ENCODE measurements at regions of chrX and their contacts with region 1.

Region 1: DNA sequence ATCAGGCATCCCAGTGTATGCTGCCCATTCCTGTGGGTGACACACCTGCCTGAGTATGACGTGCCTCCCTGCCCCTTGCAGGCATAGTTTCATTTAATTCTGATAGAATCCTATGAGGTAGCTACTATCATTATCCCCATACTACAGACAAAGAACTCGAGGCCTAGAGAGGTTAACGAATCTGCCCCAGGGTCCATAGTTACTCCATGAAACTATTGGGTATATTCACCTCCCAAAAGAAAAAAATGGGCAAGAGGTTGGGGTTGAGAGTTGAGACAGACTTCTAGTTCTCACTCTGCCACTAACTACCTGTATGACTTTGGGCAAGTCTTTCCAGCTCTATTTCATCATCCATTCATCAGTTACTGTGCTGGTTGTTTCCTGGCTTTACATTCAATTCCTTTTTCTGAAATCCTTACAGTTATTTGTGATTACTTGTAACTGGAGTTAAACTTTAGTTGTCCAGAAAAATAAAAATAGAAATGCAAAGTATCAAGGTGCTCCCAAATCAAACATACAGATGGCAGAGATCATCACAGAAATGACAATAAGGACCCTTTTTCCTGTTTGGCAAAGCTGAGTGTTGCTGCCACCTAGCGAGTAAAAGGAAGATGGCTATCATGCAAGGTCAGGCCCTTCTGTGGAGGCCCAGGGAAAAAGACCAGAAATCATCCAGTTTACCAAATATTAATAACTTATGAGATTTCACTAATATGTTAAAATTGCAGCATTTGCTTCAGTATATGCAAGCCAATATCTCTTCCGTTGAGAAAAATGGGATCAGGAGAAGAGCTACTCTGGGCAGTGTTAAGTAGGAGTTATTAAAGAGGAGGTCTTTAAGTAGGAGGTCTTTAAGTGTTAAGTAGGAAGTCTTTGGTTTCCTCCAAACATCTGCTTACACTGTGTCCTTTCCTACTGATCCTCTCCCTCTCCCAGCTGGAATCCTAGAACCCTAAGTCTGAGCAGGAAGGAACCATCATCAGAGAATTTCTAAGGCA is 17.1 kb upstream of the MAP7D3 start:
- DNase-seq: peak; percentile 34 to 42
- H3K4me3 ChIP-seq: no peak overlapping the region
- H3K27ac ChIP-seq: no peak overlapping the region
- H3K4me1 ChIP-seq: no peaks in the 10 kb centered on the region
- H3K27me3 ChIP-seq: no peaks in the 10 kb centered on the region
- CTCF ChIP-seq: peak; percentile 48 to 74 (median 64)
- POLR2A ChIP-seq: no peak

Region 2: GRCh38 chrX:136028251-136028984 is 239.9 kb before region 1 on chrX:
- intact Hi-C with region 1: loop called (anchors 5 kb)
- DNase-seq: no peak
- H3K4me3 ChIP-seq: no peak overlapping the region
- H3K27ac ChIP-seq: peak overlapping the region; percentile 87 to 97 (median 92)
- H3K4me1 ChIP-seq: peaks cover 23 to 43% of the 10 kb centered on the region in 2 donors
- H3K27me3 ChIP-seq: no peaks in the 10 kb centered on the region
- CTCF ChIP-seq: peak in 5 of 6 experiments; percentile 33 to 84 (median 60)
- POLR2A ChIP-seq: no peak

Region 3: DNA sequence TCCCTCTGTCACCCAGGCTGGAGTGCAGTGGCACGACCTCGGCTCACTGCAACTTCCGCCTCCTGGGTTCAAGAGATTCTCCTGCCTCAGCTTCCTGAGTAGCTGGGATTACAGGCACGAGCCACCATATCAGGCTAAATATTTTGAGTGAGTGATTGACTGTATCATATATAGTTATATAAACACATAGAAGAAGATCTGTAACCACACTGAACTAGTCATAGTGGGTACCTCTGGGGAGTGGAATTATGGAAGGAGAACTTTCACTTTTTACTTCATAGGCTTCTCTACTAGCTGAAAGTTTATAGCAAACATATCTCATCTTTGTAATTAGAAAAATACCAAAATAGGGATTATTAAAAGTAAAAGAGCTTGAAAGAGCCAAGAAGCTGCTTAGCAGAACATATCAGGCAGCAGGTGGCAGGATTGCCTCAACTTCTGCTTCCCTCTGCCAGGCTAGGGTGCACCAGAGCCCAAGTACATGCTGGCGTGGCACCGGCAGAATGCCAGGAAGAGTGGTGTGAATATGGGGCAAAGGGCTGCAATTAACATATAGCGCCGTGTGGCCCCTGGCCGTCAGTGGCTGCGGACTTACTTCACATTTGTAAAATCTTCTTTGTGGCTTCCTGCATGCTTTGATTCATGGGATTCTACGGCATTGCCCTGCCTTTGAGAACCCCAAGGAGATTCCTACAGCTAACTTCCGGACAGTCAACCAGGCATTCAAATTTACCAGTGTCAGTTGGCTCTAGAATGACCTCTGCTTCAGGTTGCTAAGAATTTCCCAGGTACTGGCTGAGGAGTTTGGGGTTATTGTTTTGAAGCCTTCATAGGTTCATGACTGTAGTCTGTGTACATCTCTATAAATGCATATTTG is 340.2 kb after region 1 on chrX:
- intact Hi-C with region 1: no loop called
- DNase-seq: peak; percentile 7 to 8
- H3K4me3 ChIP-seq: no peak overlapping the region
- H3K27ac ChIP-seq: no peak overlapping the region
- H3K4me1 ChIP-seq: no peaks in the 10 kb centered on the region
- H3K27me3 ChIP-seq: no peaks in the 10 kb centered on the region
- CTCF ChIP-seq: peak in 1 of 6 experiments; percentile 16
- POLR2A ChIP-seq: no peak